Heart left ventricle (tissue), 16 donors: ENCODE measurements at regions of chr17 and their contacts with region 1.

Region 1: DNA sequence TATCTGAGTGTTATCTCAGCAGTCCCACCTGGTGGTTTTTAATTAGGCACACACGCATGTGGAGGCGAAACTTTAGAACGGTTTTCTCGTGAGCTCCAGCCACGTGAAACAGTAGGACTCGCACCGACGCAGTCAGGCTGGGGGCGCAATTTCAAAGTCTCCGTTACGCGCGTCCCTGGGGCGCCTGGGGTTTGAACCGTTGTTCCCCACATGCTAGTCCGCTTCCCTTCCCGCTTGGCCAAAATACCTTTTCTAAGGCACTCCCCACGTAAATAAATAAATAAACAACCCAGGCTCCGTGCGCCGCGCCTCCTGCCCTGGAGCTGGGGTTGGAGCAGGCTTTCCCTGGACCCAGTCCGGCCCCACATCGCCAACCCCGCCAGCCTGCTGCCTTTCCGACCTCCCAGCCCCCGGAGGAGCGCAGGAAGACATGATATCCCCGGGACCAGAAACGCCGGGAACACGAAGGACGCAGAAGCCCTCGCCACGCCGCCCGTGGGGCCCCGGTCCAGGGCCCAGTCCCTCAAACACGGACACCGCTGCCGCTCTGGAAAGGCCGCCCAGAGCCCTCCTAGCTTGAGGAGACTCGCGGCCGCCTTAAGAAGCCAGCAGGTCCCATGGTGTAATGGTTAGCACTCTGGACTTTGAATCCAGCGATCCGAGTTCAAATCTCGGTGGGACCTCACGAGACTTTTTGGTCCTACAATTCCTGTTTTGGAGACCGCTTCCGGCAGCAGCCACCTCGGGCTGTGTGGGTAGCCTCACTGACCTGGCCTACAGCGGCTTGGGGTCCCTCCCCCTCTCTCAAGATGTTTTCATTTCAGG is 18.2 kb downstream of the GNGT2 start:
- DNase-seq: peak; percentile 88 to 94 (median 91)
- ATAC-seq: peak; percentile 87 to 92 (median 90)
- H3K4me3 ChIP-seq: peak overlapping the region; percentile 59 to 95 (median 80)
- H3K27ac ChIP-seq: peak overlapping the region; percentile 92 to 99 (median 98)
- H3K4me1 ChIP-seq: peaks cover 0 to 23% (median 3%) of the 10 kb centered on the region in 12 donors
- H3K27me3 ChIP-seq: no peaks in the 10 kb centered on the region
- CTCF ChIP-seq: peak in 9 of 12 donors; percentile 17 to 61 (median 33)
- POLR2A ChIP-seq: peak in 1 of 2 donors; percentile 7

Region 2: GRCh38 chr17:49210158-49211029 is 18.3 kb after region 1 on chr17 and contains the starts of genes ABI3 and GNGT2:
- intact Hi-C with region 1: loop called in 2 of 10 experiments (anchors 2 kb)
- DNase-seq: peak; percentile 46 to 75 (median 64)
- ATAC-seq: peak; percentile 83 to 93 (median 88)
- H3K4me3 ChIP-seq: peak within 1 kb of the TSS; percentile 32 to 70 (median 60)
- H3K27ac ChIP-seq: peak within 1 kb of the TSS; percentile 65 to 91 (median 84)
- H3K4me1 ChIP-seq: peaks cover 0 to 69% (median 24%) of the 10 kb centered on the region in 12 donors
- H3K27me3 ChIP-seq: peaks cover 0 to 7% (median 0%) of the 10 kb centered on the region in 9 donors
- CTCF ChIP-seq: no peak
- POLR2A ChIP-seq: peak in 1 of 2 donors; percentile 41
- total RNA-seq, gene ABI3: 3.3 to 16.1 (median 6.4) TPM
- total RNA-seq, gene GNGT2: 0.76 to 4.9 (median 1.2) TPM

Region 3: GRCh38 chr17:49217651-49218413 is 25.7 kb after region 1 on chr17:
- intact Hi-C with region 1: loop called in 1 of 10 experiments (anchors 2 kb)
- DNase-seq: peak; percentile 63 to 85 (median 71)
- ATAC-seq: peak; percentile 54 to 77 (median 62)
- H3K4me3 ChIP-seq: peak overlapping the region in 2 of 12 donors; percentile 0 to 16
- H3K27ac ChIP-seq: peak overlapping the region; percentile 9 to 91 (median 70)
- H3K4me1 ChIP-seq: peaks cover 5 to 77% (median 36%) of the 10 kb centered on the region in 12 donors
- H3K27me3 ChIP-seq: peaks cover 0 to 39% (median 8%) of the 10 kb centered on the region in 9 donors
- CTCF ChIP-seq: no peak
- POLR2A ChIP-seq: no peak

Region 4: DNA sequence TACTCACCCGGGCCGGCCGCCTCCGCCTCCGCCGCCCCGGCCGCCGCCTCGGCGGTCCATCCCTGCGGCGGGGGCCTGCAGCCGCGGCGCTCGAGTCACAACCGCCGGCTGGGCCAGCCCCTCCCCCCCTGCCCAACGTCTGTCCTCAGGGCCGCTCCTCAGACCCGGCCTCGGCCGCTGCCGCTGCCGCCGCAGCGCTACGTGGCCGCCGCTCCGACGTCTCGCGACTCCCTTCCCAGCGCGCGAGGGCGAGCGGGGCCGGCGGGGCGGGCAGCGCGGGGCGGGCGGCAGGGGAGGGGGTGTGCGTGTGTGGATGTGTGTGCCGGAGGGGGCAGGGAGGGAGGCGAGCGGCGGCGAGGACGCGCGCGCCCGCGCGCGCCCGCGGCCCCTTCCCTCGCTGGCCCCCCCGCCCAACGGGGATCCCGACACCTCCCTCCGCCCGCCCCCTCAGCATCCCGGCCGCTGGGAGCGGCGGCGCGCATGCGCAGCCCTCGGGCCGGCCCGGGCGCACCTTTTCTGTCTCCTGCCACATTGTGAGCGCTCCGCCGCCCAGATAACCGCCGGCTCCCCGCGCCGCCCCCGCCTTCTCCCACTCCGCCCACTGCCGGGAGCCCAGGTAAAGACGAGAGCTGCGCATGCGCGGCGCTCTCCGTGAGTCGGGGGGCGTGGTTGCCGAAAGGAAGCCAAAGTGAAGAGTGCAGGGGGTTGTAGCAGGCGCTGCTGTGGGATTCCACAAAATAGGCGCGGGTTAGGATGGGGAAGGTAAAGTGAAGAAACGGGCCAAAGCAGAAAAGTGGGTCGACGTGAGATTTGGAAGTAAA is 170.0 kb after region 1 on chr17 and contains the start of gene ZNF652:
- intact Hi-C with region 1: no loop called
- DNase-seq: peak; percentile 88 to 93 (median 93)
- ATAC-seq: peak; percentile 82 to 96 (median 89)
- H3K4me3 ChIP-seq: peak within 1 kb of the TSS; percentile 77 to 98 (median 92)
- H3K27ac ChIP-seq: peak within 1 kb of the TSS; percentile 73 to 95 (median 89)
- H3K4me1 ChIP-seq: peaks cover 5 to 53% (median 26%) of the 10 kb centered on the region in 12 donors
- H3K27me3 ChIP-seq: no peaks in the 10 kb centered on the region
- CTCF ChIP-seq: no peak
- POLR2A ChIP-seq: peak in 1 of 2 donors; percentile 8
- total RNA-seq, gene ZNF652: 14.7 to 24.5 (median 23.1) TPM